ENCODE measurements at regions of chr18 and their contacts with region 1.

Region 1: DNA sequence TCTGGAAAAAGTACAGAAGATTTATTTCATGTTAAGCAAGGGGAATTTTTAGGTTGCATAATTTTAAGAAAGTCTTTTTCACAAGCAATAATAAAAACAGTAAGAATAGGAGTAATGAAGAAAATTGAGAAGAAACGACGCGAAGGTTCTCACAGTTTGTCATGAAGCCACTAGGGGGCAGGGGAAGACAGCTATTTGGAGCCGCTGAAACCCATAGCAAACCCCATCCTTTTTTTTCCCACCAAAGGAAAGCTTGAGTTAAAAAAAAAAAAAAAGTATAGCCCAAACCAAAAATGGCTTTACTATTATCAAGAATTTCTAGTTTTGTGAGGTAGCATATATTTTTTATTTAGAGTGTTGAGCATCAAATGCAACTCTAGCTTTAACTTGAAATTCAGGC is 300.9 kb downstream of the PHLPP1 start:
- DNase-seq: peak; percentile 72
- CTCF ChIP-seq: peak; percentile 66

Region 2: DNA sequence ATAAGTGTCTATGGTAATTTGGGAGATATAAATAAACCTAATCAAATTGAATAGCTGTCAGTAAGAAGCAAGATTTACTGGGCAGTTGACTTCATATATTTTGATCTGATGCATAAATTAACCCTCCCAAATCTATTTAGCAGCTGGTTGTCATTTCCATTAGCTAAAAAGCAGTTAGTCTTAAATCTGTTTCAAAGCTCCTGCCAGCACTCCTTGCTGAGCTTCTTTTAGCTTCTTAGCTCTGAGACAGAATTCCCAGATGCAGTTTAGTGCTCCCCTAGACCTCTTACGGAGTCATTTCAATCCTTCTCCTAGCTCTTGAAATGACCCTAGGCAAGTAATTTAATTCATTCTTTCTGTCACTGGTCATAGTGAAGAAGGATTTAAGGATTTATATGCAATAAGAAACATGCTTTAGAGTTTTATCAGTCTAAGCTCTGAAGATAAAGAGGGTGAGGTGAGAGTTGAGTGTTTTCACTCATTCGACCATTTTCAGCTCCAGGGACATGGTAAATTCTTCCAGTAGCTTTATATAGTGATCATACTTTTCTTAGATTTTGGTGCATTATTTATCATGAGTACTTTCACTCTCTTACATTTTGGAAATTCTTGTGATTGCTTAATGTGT is 202.0 kb before region 1 on chr18:
- CTCF ChIA-PET with region 1: no interaction called
- POLR2A ChIA-PET with region 1: no interaction called
- DNase-seq: no peak
- CTCF ChIP-seq: no peak

Region 3: DNA sequence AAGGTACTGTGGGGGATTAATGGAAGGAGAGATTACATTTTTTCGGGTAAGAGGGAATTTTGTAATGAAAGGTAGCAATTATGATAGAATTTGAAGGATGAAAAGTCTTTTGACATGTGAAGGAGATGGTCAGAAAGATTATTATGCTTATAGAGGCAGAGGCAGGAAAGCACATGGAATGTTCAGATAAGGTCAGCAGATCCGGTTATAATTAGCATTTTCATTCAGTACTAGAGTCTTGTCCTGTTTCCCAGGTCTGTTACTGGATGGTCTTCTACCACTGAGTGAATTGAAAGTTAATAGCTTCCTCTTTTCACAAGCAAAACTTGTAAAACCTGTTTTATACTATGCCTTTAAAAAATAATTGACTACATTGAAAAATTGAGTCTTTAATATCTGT is 184.0 kb before region 1 on chr18:
- CTCF ChIA-PET with region 1: no interaction called
- POLR2A ChIA-PET with region 1: no interaction called
- DNase-seq: peak; percentile 18
- CTCF ChIP-seq: no peak

Region 4: GRCh38 chr18:62898359-62898758 is 117.9 kb before region 1 on chr18:
- CTCF ChIA-PET with region 1: no interaction called
- POLR2A ChIA-PET with region 1: no interaction called
- DNase-seq: peak; percentile 57
- CTCF ChIP-seq: no peak

Region 5: DNA sequence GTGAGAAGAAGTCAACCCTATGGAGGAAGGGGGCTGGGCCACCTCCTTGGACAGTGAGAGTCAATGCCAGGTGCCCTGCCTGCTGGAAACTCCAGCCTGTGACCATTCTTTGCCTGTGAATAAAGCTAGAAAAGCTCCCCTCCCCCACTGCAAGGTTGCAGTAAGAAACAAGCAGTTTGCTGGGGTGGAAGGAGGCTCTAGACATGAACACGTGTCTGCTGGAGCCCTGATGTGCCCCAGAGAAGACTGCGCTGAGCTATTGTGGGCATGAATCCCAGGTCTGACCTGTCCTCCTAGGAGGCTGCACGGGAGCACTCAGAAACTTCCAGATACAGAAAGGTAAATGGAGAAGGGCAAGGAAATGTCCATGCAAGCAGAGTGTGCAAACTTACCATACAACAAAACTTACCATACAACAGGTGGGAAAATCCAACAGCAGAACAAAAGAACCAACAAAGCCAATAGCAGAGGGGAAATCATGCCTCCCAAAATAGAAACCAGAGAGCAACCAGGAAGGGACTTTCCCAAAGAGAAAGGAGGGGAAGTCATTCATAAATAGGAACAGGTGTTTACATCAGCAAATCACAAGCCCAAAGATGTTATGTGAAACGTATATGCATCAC is 24.6 kb after region 1 on chr18:
- CTCF ChIA-PET with region 1: interaction called, 13 read pairs
- POLR2A ChIA-PET with region 1: no interaction called
- DNase-seq: peak; percentile 59
- CTCF ChIP-seq: no peak

Region 6: GRCh38 chr18:63073481-63073880 is 57.2 kb after region 1 on chr18:
- CTCF ChIA-PET with region 1: interaction called, 13 read pairs
- POLR2A ChIA-PET with region 1: no interaction called
- DNase-seq: peak; percentile 69
- CTCF ChIP-seq: peak; percentile 75

Region 7: DNA sequence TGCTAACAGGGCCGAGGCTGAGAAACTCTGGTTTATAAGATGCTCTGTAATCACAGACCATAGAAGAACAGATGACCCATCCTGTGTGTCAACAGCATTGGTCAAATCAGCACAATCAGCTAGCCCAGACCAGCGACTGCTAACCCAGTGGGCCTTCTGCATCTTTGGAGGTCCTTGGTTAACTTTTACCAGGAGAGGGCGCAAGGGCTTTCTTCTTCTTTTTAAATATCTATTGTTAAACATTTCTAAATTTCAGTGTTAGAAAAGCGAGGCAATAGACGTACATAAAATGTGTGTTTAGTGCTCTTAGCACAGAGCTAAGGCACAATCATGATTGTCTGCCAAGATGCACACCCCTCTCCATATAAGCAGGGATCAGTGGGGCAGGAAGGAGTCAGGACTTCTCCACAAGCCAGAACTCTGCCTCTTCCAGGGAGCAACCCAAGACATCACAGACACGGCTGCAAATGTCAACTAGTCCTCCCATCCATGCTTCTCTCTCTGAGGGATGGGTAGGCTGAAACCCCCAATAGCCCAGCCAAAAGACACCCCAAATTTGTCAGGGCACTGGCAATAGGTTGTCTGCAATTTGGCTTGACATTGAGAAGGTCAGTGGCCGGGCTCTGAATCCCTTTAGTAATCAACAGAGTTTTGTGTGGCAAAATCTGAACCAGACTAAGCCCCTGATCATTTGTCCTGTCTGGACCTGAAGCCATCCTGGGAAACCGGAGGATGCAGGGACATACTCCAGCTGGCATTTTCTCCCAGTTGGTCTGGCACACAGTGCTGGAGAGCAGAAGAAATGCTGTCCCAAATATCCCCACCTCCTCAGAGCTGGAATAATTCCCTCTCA is 115.1 kb after region 1 on chr18:
- CTCF ChIA-PET with region 1: interaction called, 16 read pairs
- POLR2A ChIA-PET with region 1: no interaction called
- DNase-seq: no peak
- CTCF ChIP-seq: peak; percentile 47

Region 8: GRCh38 chr18:63311118-63312018 is 295.1 kb after region 1 on chr18:
- CTCF ChIA-PET with region 1: interaction called, 11 read pairs
- POLR2A ChIA-PET with region 1: no interaction called
- DNase-seq: peak; percentile 44
- CTCF ChIP-seq: no peak

Region 9: GRCh38 chr18:63439334-63439733 is 423.1 kb after region 1 on chr18:
- CTCF ChIA-PET with region 1: interaction called, 28 read pairs
- POLR2A ChIA-PET with region 1: no interaction called
- DNase-seq: peak; percentile 63
- CTCF ChIP-seq: peak; percentile 85

Measured in GM10248 (cell line).